Activated naive CD4-positive, alpha-beta T cell treated with anti-CD3 and anti-CD28 coated beads for 36 hours (primary cell): ENCODE measurements at regions of chr2 and their contacts with region 1.

Region 1: GRCh38 chr2:33583194-33583938 is 15.7 kb downstream of the FAM98A start:
- DNase-seq: peak; percentile 37
- H3K4me3 Mint-ChIP-seq: no peak overlapping the region
- H3K27ac Mint-ChIP-seq: no peak overlapping the region
- H3K4me1 Mint-ChIP-seq: peaks cover 10% of the 10 kb centered on the region
- H3K27me3 Mint-ChIP-seq: no peaks in the 10 kb centered on the region

Region 2: GRCh38 chr2:32772638-32773447 is 810.5 kb before region 1 on chr2:
- CTCF ChIA-PET with region 1: no interaction called
- intact Hi-C with region 1: loop called (anchors 2 kb)
- DNase-seq: no peak
- H3K4me3 Mint-ChIP-seq: no peak overlapping the region
- H3K27ac Mint-ChIP-seq: no peak overlapping the region
- H3K4me1 Mint-ChIP-seq: peaks cover 4% of the 10 kb centered on the region
- H3K27me3 Mint-ChIP-seq: no peaks in the 10 kb centered on the region

Region 3: GRCh38 chr2:33210626-33211025 is 372.7 kb before region 1 on chr2:
- CTCF ChIA-PET with region 1: interaction called, 3 read pairs
- intact Hi-C with region 1: loop called (anchors 10 kb)
- DNase-seq: no peak
- H3K4me3 Mint-ChIP-seq: no peak overlapping the region
- H3K27ac Mint-ChIP-seq: no peak overlapping the region
- H3K4me1 Mint-ChIP-seq: no peaks in the 10 kb centered on the region
- H3K27me3 Mint-ChIP-seq: peaks cover 4% of the 10 kb centered on the region

Region 4: DNA sequence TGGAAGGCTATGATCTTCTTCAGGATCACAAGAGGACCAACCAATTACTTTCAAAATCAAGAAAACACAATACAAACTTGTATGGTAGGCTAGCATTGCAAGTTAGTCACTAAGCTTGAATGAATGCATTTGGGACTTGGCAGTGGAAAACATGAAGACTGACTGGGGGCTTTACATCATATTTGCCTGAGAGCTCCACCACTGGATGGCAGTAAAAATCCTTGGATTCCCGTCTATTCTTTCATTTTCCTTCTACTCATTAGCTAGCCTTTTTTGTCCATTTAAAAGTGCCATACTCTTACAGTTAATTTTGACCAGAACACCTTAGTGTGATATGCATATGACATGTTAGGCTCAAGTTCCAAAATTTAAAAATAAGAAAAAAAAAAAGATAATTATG is 170.4 kb before region 1 on chr2:
- CTCF ChIA-PET with region 1: interaction called, 3 read pairs
- intact Hi-C with region 1: loop called (anchors 1 kb)
- DNase-seq: peak; percentile 11
- H3K4me3 Mint-ChIP-seq: no peak overlapping the region
- H3K27ac Mint-ChIP-seq: no peak overlapping the region
- H3K4me1 Mint-ChIP-seq: no peaks in the 10 kb centered on the region
- H3K27me3 Mint-ChIP-seq: peaks cover 2% of the 10 kb centered on the region

Region 5: DNA sequence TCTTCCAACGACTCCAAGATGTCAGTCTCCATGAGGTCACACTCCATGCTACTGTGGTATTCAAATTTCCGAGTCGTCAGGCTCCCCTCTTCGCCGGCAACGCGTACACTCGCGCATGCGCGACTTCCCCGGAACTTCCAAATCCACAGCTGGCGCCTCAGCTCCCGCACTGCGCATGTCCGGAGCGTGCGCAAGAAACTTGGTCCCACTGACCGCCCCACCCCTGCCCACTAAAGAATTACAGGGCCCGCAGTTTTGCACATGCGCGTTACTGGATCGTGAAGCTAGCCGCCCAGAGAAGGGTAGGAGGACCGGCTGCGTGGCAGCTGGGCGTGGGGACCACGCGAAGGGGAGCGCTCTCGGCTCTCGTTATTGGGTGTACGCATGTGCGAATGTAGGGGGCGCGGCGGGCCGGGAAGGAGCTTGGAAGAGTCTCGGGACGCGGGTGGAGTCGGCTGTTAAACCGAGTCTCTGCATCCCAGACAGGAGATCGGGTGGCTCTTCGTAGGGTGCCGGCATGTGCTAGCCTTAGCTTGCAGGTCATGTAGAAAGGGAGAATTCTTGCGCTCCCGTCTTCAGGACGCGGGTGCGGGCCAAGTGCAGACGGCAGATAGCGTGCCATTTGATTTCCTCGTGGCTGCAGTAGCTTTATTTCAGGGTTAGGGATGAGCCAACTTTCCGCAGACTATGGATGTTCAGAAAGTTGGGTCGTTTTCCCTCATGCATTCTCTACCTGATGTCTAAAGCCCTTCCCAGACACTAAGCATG is 16.0 kb after region 1 on chr2 and contains the start of gene FAM98A:
- CTCF ChIA-PET with region 1: interaction called, 18 read pairs
- intact Hi-C with region 1: no loop called
- DNase-seq: peak; percentile 98
- H3K4me3 Mint-ChIP-seq: peak within 1 kb of the TSS; percentile 95
- H3K27ac Mint-ChIP-seq: peak within 1 kb of the TSS; percentile 87
- H3K4me1 Mint-ChIP-seq: peaks cover 22% of the 10 kb centered on the region
- H3K27me3 Mint-ChIP-seq: no peaks in the 10 kb centered on the region
- total RNA-seq, gene FAM98A: 45.4 to 46.1 TPM

Region 6: DNA sequence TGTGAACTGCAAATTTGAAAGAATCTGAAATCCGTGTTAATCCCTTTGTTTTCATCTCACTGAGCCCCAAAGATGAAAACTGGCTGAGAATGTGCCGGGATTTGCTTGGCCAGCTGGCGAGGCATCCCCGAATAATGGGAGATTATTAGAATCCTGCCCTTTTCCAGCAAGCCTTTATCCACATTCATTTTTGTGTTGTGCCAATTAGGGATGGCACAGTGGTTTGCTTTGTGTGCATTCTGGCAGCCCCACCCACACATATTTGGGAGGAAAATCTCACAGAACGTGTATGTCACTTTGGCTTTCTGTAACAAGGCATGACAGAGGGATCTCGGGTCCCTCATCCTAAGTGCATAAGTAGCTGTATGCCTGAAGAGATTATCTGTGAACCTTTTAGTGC is 421.6 kb after region 1 on chr2:
- CTCF ChIA-PET with region 1: no interaction called
- intact Hi-C with region 1: no loop called
- DNase-seq: no peak
- H3K4me3 Mint-ChIP-seq: no peak overlapping the region
- H3K27ac Mint-ChIP-seq: no peak overlapping the region
- H3K4me1 Mint-ChIP-seq: no peaks in the 10 kb centered on the region
- H3K27me3 Mint-ChIP-seq: no peaks in the 10 kb centered on the region